WTC11 (cell line): ENCODE measurements at regions of chr1 and their contacts with region 1.

Region 1: GRCh38 chr1:67766141-67766978 is 66.9 kb downstream of the GNG12 start:
- DNase-seq: peak; percentile 36
- ATAC-seq: peak; percentile 64
- H3K4me3 Mint-ChIP-seq: peak overlapping the region; percentile 54
- H3K27ac Mint-ChIP-seq: peak overlapping the region; percentile 28; the same call in 1 of the 2 replicates
- H3K4me1 Mint-ChIP-seq: peaks cover 13% of the 10 kb centered on the region
- H3K27me3 Mint-ChIP-seq: no peaks in the 10 kb centered on the region
- CTCF ChIP-seq: peak; percentile 75

Region 2: GRCh38 chr1:67524143-67525052 is 242.0 kb before region 1 on chr1:
- CTCF ChIA-PET with region 1: interaction called, 12 read pairs
- POLR2A ChIA-PET with region 1: no interaction called
- DNase-seq: no peak
- ATAC-seq: peak; percentile 71
- H3K4me3 Mint-ChIP-seq: no peak overlapping the region
- H3K27ac Mint-ChIP-seq: no peak overlapping the region
- H3K4me1 Mint-ChIP-seq: no peaks in the 10 kb centered on the region
- H3K27me3 Mint-ChIP-seq: peaks cover 98% of the 10 kb centered on the region
- CTCF ChIP-seq: no peak

Region 3: GRCh38 chr1:67705735-67706453 is 60.5 kb before region 1 on chr1:
- CTCF ChIA-PET with region 1: no interaction called
- POLR2A ChIA-PET with region 1: no interaction called
- DNase-seq: no peak
- ATAC-seq: no peak
- H3K4me3 Mint-ChIP-seq: no peak overlapping the region
- H3K27ac Mint-ChIP-seq: peak overlapping the region; percentile 5; the same call in 1 of the 2 replicates
- H3K4me1 Mint-ChIP-seq: peaks cover 6% of the 10 kb centered on the region
- H3K27me3 Mint-ChIP-seq: no peaks in the 10 kb centered on the region
- CTCF ChIP-seq: no peak

Region 4: DNA sequence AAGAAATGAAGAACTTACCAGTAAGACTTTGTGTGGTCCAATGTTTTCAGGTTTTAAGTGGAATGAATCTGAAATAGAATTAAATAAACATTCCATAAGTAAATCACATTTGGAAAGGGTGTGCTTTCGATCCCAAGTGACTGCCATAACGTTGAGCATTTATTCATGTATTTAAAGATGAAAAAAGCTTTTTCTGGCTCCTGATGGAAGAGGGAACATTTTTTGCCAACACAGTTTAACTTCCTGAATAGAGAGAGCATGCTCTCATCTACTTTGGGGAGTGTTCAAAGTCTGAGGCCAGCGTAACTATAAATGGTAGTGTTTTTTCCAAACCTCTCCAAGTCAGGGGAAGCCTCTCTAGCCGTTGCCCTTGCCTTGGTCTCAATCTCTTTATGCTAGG is 11.1 kb after region 1 on chr1:
- CTCF ChIA-PET with region 1: interaction called, 10 read pairs
- POLR2A ChIA-PET with region 1: no interaction called
- DNase-seq: no peak
- ATAC-seq: no peak
- H3K4me3 Mint-ChIP-seq: no peak overlapping the region
- H3K27ac Mint-ChIP-seq: no peak overlapping the region
- H3K4me1 Mint-ChIP-seq: peaks cover 6% of the 10 kb centered on the region; the same call in 1 of the 2 replicates
- H3K27me3 Mint-ChIP-seq: no peaks in the 10 kb centered on the region
- CTCF ChIP-seq: no peak

Region 5: DNA sequence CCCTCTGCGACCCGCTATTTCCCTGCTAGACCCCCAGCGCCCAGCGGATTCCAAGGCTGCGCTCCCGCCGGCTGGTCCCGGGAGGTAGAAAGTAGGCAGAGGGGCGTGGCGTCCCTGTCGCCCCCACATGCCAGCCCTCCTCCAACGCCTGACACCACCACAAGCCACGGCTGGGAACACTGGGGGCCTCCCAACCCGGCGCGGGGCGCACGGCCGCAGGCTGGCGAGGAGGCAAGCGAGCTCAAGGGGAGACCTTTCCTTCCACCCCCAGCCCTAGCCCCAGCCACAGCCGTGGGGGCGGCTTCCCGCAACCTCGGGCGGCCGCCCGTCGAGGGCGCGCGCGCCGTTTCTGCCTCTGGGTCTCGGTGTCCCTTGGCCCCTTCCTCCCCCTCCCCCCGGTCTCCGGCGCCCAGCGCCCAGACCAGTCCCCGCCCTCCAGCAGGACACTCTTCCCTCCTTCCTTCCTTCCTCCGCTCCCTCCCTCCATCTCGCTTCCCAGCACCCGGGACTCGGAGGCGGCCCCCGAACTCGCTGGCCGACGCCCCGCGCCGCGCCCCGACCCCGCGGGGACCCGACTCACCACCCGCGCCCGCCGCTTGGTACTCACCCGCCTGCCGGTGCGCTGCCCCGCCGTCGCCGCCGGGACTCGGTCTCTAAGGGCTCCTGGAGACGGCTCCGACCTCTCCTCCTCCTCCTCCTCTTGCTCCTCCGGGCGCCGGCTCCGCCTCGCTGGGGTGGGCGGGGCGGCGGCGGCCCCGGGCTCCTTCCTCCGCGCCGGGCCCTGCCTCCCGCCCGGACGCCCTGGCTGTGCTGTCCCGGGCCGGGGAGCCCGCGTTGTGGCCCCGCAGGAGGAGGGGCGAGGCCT is 66.6 kb after region 1 on chr1 and contains the start of gene GNG12:
- CTCF ChIA-PET with region 1: interaction called, 12 read pairs
- POLR2A ChIA-PET with region 1: no interaction called
- DNase-seq: peak; percentile 84
- ATAC-seq: peak; percentile 85
- H3K4me3 Mint-ChIP-seq: peak within 1 kb of the TSS; percentile 93
- H3K27ac Mint-ChIP-seq: no peak within 1 kb of the TSS
- H3K4me1 Mint-ChIP-seq: peaks cover 55% of the 10 kb centered on the region
- H3K27me3 Mint-ChIP-seq: peaks cover 25% of the 10 kb centered on the region
- CTCF ChIP-seq: no peak
- total RNA-seq, gene GNG12: 20.7 to 23.7 TPM (median 21.9 TPM) in 3 replicates

Region 6: GRCh38 chr1:68010090-68010489 is 243.7 kb after region 1 on chr1:
- CTCF ChIA-PET with region 1: interaction called, 13 read pairs
- POLR2A ChIA-PET with region 1: no interaction called
- DNase-seq: no peak
- ATAC-seq: peak; percentile 46; the same call in 1 of the 2 replicates
- H3K4me3 Mint-ChIP-seq: no peak overlapping the region
- H3K27ac Mint-ChIP-seq: no peak overlapping the region
- H3K4me1 Mint-ChIP-seq: no peaks in the 10 kb centered on the region
- H3K27me3 Mint-ChIP-seq: no peaks in the 10 kb centered on the region
- CTCF ChIP-seq: no peak

Region 7: GRCh38 chr1:68120136-68120791 is 353.9 kb after region 1 on chr1:
- CTCF ChIA-PET with region 1: interaction called, 11 read pairs
- POLR2A ChIA-PET with region 1: no interaction called
- DNase-seq: peak; percentile 37
- ATAC-seq: peak; percentile 82
- H3K4me3 Mint-ChIP-seq: no peak overlapping the region
- H3K27ac Mint-ChIP-seq: 0 out of 2 replicates have a peak overlapping the region, but pooled peaks have one; percentile 35
- H3K4me1 Mint-ChIP-seq: 0 out of 2 replicates have a peak, but pooled peaks cover 5% of the 10 kb centered on the region
- H3K27me3 Mint-ChIP-seq: no peaks in the 10 kb centered on the region
- CTCF ChIP-seq: peak; percentile 68